Gastrocnemius medialis (tissue), 4 donors: ENCODE measurements at regions of chr9 and their contacts with region 1.

Region 1: GRCh38 chr9:69056191-69056815 is 20.8 kb downstream of the FXN start:
- DNase-seq: no peak
- ATAC-seq: no peak
- H3K4me3 ChIP-seq: no peak overlapping the region
- H3K27ac ChIP-seq: no peak overlapping the region
- H3K4me1 ChIP-seq: no peaks in the 10 kb centered on the region
- H3K27me3 ChIP-seq: no peaks in the 10 kb centered on the region
- CTCF ChIP-seq: no peak
- POLR2A ChIP-seq: no peak

Region 2: DNA sequence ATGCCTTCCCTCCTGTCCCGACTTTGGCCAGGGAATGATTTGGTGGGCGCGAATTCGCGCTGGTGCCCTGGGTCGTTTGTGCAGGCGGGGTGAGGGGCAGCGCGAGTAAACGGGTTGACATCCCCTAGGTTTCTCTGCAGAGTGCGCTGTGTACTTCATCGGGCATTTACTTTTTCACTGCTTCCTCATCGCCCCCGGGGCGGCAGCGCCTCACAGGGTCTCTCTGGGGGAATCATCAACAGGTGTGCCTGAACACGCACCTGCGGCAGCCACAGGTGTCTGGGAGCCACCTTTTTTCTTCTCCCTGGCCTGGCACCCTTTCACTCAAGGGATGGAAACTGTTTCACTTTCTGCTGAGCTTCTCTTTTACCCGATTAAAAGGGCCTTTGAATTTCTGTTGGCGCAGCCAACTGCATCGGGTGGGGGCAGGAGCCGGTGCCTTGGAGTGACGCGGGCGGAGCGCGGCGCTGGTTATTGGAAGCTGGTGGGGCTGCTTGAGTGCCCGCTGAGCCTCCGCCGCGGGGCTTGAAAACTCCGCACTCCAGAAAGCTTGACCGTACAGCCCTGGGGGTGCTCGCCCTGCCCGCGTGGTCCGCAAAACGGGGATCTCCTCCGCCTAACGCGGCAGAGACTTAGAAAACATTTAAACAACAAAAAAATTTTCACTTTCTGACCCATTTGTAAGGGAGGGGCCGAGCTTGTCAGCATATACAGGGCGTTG is 65.7 kb after region 1 on chr9:
- in situ Hi-C with region 1: no loop called
- intact Hi-C with region 1: loop called (anchors 5 kb)
- DNase-seq: no peak
- ATAC-seq: peak; percentile 61 to 72
- H3K4me3 ChIP-seq: peak overlapping the region; percentile 53 to 88 (median 74)
- H3K27ac ChIP-seq: peak overlapping the region; percentile 1 to 73 (median 68)
- H3K4me1 ChIP-seq: peaks cover 0 to 10% of the 10 kb centered on the region in 2 donors
- H3K27me3 ChIP-seq: no peaks in the 10 kb centered on the region
- CTCF ChIP-seq: no peak
- POLR2A ChIP-seq: no peak

Region 3: GRCh38 chr9:69190086-69190862 is 134.0 kb after region 1 on chr9:
- in situ Hi-C with region 1: loop called (anchors 5 to 10 kb)
- intact Hi-C with region 1: loop called (anchors 1 kb)
- DNase-seq: no peak
- ATAC-seq: no peak
- H3K4me3 ChIP-seq: no peak overlapping the region
- H3K27ac ChIP-seq: no peak overlapping the region
- H3K4me1 ChIP-seq: peaks cover 21 to 34% of the 10 kb centered on the region in 2 donors
- H3K27me3 ChIP-seq: no peaks in the 10 kb centered on the region
- CTCF ChIP-seq: no peak
- POLR2A ChIP-seq: no peak

Region 4: DNA sequence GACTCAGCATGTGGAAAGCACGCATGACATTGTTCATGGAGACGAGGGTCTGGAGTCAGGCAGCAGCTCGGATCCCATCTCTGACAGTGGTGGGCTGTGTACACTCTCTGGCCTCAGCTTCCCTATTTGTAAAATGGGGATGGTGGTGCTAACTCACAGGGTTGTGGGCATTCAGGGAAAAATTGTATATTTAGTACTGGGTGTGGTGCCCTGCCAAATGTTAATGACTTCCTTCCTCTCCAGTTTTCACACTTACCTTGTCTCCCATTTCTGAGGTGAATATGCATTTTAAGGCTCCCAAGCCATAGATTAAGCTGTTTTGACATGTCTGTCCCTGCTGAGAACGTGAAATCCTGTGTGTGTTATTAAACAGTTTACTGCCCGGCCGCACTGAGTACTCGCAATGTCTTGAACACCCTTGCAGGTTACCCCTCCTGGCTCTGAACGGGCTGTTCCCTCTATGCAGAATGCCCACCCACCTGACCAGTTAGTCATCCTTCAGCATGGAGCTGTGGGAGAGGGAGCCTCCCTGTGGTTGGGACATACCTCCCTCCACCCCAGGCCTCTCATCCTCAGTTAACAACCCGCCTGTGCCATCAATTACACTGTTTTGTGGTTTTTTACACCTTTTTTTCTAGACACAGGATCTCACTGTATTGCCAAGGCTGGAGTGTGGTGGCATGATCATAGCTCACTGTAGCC is 143.6 kb after region 1 on chr9:
- in situ Hi-C with region 1: loop called in 3 of 4 experiments (anchors 5 to 10 kb)
- intact Hi-C with region 1: no loop called
- DNase-seq: no peak
- ATAC-seq: no peak
- H3K4me3 ChIP-seq: no peak overlapping the region
- H3K27ac ChIP-seq: no peak overlapping the region
- H3K4me1 ChIP-seq: peaks cover 0 to 13% of the 10 kb centered on the region in 2 donors
- H3K27me3 ChIP-seq: no peaks in the 10 kb centered on the region
- CTCF ChIP-seq: no peak
- POLR2A ChIP-seq: no peak